AG04450 (cell line): ENCODE measurements at regions of chr15 and their contacts with region 1.

Region 1: DNA sequence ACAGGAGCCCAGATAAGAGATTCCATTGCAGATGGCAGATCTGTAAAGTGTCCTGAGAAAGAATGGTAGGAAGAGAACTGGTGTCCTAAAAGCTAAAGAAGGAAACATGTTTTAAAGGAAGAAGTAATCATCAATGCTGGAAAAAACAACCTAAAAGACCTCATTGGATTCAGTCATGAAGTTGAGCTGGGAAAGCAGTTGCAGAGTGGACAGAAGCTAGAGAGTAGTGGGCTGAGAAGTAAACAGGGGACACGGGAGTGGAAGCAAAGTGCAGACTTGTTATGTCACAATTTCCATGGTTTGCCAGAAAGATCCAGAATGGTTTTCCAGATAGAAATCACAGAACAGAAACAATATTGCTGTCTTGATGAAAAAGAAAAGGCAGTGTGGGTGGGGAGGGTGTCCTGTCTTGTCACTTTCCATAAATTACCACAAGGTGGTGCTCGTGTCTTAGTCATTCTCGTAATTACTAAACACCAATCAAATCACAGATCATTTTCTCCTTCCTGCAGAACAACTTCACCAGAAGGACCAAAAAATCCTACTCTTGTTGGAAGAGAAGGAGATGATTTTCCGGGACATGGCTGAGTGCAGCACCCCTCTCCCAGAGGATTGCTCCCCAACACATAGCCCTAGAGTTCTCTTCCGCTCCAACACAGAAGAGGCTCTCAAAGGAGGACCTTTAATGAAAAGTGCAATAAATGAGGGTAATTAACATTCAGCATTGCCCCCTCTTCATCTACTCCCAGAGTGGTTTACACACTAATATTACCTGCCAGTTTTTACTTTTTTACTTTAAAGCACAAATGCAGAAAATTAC is 64.5 kb downstream of the KLHL25 start:
- DNase-seq: peak; percentile 37
- H3K4me3 ChIP-seq: no peak overlapping the region
- H3K27ac ChIP-seq: no peak overlapping the region
- H3K27me3 ChIP-seq: no peaks in the 10 kb centered on the region
- CTCF ChIP-seq: peak; percentile 69

Region 2: DNA sequence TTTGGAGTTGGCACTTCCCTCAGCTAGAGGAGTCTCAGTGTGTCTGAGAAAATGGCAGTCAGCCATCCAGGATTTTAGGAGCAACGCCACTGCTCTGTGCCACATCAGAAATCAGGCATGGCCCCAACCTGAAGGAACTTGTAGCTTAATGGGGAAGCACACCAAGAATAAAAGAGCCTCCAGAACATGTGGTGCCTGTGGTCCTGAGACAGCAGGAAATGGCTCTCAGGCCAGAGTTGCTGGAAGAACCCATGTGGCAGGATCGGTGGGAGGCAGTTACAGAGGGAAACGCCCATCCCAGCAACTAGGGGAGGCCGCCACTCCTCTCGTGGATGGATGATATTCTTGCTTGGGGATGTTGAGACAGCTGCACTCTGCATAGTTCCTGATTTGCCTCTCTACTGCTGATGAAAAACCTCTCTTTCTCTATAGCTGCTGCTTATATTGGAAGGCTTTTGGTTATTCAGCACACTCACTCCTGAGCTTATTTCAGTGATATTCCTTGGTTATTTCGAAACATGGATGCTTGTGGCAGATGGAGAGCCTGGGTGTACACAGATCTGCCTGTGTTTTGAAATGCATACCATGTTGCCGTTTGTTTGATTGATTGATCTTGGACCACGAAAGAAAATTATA is 12.1 kb after region 1 on chr15:
- CTCF ChIA-PET with region 1: interaction called, 37 read pairs
- POLR2A ChIA-PET with region 1: no interaction called
- DNase-seq: no peak
- H3K4me3 ChIP-seq: no peak overlapping the region
- H3K27ac ChIP-seq: peak overlapping the region; percentile 2
- H3K27me3 ChIP-seq: no peaks in the 10 kb centered on the region
- CTCF ChIP-seq: no peak

Region 3: DNA sequence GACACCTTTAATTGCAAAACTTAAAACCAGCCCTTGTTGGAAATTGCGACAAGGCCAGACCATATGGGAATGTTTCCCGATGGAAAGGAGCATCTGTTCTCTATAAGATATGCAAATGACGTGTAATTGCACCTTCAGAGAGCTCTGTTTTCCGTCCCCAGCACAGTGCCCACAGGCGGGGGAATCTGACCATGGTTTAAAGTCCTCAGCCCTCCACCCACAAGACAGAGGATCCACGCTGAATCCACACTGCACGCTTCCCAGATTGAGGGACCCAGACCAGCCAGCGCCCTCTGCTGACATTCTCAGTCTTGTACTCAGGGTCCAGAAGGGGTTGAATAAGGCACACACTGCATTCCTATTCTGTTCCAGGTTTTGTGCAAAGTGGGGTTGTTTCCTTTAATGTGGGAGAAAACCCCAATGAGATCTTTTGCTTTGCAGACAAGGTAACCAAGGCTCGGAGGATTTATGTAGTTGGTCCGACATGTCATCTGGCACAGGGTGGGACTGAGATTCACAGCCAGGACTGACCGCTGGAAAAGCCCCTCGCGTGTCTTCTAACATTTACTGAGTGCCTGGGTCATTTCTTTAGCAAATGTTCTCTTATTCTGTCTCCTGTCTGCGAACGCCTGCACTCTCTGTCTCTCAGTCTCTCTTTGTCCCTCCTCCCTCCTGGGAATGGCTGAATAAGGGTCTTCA is 101.4 kb after region 1 on chr15:
- CTCF ChIA-PET with region 1: interaction called, 73 read pairs
- POLR2A ChIA-PET with region 1: no interaction called
- DNase-seq: no peak
- H3K4me3 ChIP-seq: no peak overlapping the region
- H3K27ac ChIP-seq: no peak overlapping the region
- H3K27me3 ChIP-seq: peaks cover 6% of the 10 kb centered on the region
- CTCF ChIP-seq: peak; percentile 83